RWPE1 (cell line): ENCODE measurements at regions of chr22 and their contacts with region 1.

Region 1: GRCh38 chr22:20885557-20886323 is 26.9 kb downstream of the SNAP29 start:
- DNase-seq: peak; percentile 61
- H3K27ac ChIP-seq: peak overlapping the region; percentile 67
- CTCF ChIP-seq: peak; percentile 90

Region 2: GRCh38 chr22:20875296-20875695 is 10.4 kb before region 1 on chr22:
- CTCF ChIA-PET with region 1: interaction called, 10 read pairs
- POLR2A ChIA-PET with region 1: no interaction called
- DNase-seq: no peak
- H3K27ac ChIP-seq: no peak overlapping the region
- CTCF ChIP-seq: no peak